Activated T-helper 1 cell treated with anti-CD3 and anti-CD28 coated beads, Interleukin-12 subunit alpha, Interleukin-12 subunit beta, Interleukin-2, Interleukin-4 antibody, amounts not matched to agents 30 ng/mL and 10 ng/mL and 1 ng/mL, durations not matched to agents 14 hours and 24 hours and 36 hours (primary cell): ENCODE measurements at regions of chr7 and their contacts with region 1.

Region 1: DNA sequence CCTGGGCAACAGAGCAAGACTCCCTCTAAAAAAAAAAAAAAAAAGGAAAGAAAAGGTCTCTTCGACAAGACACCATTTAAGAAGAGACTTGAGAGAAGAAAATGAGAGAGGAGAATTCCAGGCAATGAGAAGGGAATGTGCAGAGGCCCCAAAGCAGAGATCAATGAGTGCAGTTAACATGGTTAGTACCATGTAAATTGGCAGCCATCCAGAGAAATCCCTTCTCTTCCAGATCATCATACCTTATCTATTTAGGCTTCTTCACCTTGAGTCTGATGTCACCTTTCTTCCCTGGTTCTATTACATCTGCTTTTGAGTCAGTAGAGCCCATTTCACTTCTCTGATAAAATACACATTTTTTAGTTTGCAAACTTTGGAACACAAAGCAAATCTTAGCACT is 22.6 kb downstream of the LHFPL3 start:
- DNase-seq: no peak
- H3K4me3 Mint-ChIP-seq: no peak overlapping the region
- H3K27ac Mint-ChIP-seq: no peak overlapping the region
- H3K4me1 Mint-ChIP-seq: no peaks in the 10 kb centered on the region
- H3K27me3 Mint-ChIP-seq: peaks cover 2% of the 10 kb centered on the region

Region 2: DNA sequence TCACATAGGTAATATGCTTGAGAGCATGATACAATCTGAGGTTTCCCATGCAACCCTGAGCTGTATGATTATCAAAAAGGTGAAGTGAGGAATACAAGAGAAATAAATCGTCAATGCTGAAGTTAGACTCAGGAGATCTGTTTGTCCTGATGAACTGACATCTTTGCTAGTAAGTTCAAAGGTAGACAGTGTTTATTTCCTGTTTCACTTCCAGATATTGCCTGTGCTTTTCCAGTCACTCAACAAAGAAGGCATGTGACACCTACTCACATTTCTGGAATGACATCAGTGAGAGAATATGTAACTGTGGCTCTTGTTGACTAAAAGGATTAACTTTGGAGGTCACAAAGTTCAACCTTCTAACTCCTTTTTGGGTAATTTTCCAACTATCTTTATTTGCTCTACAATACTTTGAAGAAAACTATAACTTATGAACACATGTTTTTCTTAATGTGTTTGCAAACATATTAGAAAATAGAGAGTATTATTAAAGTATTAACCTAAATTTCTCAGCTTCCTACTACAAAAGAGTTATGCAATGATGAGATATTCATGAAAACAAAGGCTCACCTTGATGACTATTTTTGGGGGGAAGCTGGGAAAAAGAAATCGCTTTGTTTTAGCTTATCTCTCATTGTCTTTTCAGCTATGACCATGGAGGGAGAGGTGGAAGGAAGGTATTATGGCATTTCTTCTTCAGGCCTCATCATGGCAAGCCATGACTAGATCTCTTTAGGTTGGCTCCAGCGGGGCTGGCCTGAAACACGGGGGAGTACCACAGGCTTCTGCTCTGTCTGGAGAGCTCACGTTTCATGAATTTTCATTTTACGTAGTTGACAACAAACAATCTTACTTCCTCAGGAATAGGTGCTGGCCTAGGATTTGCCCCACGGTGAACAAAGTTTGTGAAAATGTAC is 690.3 kb before region 1 on chr7:
- intact Hi-C with region 1: no loop called
- DNase-seq: no peak
- H3K4me3 Mint-ChIP-seq: no peak overlapping the region
- H3K27ac Mint-ChIP-seq: no peak overlapping the region
- H3K4me1 Mint-ChIP-seq: no peaks in the 10 kb centered on the region
- H3K27me3 Mint-ChIP-seq: no peaks in the 10 kb centered on the region

Region 3: GRCh38 chr7:104541897-104542296 is 190.9 kb after region 1 on chr7:
- intact Hi-C with region 1: loop called (anchors 5 kb)
- DNase-seq: no peak
- H3K4me3 Mint-ChIP-seq: no peak overlapping the region
- H3K27ac Mint-ChIP-seq: peak overlapping the region; percentile 23
- H3K4me1 Mint-ChIP-seq: no peaks in the 10 kb centered on the region
- H3K27me3 Mint-ChIP-seq: no peaks in the 10 kb centered on the region

Region 4: DNA sequence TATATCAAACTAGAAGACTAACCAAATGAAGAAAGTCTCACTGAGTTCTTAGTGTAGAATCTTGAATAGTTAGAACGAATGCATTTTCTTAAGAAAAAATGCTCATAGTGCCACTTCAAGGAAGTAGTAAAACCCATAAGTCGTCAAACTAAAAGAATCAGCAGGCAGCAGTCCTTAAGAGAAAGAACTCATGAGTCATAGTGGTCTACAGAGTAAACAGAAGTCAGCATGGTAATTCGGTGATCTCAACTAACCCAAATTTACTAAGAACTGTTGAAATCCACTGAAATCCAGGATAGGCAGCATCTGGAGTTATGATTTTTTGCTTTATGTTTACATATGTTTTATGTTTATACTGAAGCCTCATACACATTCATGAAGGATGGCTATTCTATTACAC is 233.6 kb after region 1 on chr7:
- intact Hi-C with region 1: no loop called
- DNase-seq: no peak
- H3K4me3 Mint-ChIP-seq: no peak overlapping the region
- H3K27ac Mint-ChIP-seq: no peak overlapping the region
- H3K4me1 Mint-ChIP-seq: no peaks in the 10 kb centered on the region
- H3K27me3 Mint-ChIP-seq: no peaks in the 10 kb centered on the region